Calu3 (cell line): ENCODE measurements at regions of chr5 and their contacts with region 1.

Region 1: DNA sequence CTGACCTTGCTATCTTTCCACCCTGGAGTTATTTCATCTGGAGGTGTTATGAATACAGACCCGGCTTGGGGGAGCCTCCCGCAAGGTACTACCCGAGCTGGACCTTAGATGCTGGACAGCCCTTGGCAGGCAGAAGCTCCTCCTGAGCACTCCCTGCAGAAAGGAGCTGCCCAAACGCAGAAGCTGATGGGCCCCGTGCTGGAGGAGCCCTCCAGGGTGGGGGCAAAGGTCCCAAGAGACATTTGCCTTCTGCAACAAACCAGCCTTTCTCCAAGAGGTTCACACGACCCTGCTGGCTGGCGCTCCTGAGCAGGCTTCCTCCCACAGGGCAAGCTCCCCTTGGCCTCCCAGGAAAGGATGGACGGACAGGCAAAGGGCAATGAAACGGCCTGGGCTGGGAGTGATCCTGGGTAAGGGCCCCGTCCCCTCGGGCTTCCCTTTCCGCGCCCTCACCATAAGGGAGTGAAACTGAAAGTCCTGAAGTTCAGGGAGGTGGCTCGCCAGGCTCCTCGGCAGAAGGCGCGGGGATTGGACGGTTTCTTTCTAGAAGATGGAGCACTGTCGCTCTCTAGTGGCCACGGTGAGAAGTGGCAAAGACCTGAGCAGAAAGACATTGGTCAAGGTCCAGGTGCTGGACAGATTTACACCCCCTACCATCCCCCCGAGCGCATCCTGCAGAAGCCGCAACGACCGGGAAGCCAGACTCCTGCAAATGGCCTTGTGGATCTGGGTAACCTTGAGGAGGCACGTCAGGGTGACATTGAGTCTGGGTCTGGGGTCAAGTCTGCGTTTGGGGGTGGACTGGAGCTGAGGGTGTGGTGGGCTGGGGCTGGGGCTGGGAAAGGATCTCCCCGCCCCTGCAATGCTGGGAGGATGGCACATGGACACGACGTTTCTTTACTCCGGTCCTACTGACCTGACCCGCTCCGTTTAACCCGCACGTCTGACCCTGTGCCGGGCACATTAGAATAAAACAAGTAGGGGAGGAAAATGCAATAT is 56.4 kb downstream of the NEURL1B start:
- DNase-seq: peak; percentile 92
- H3K4me3 Mint-ChIP-seq: peak overlapping the region; percentile 77
- H3K27ac Mint-ChIP-seq: peak overlapping the region; percentile 55
- H3K4me1 Mint-ChIP-seq: peaks cover 10% of the 10 kb centered on the region
- H3K27me3 Mint-ChIP-seq: peaks cover 36% of the 10 kb centered on the region
- CTCF ChIP-seq: peak; percentile 86

Region 2: DNA sequence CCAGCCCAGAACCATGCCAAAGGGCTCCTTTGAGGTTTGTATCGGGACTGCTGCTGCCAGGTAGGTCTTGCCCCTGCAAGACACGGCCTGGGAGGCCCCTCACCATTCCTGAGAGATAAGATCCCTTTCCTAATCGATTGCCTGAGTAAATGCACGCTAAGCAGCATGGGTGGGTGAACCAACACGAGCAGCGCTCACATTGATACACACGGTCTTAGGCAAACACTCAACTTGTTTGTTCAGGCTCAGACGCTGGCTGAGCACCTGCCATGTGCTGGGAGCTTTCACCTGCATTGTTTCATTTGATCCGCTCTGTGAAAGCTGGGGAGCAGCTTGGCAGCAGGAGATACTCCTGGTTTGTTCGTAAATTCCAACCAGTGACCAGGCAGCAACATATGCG is 133.2 kb before region 1 on chr5:
- CTCF ChIA-PET with region 1: no interaction called
- intact Hi-C with region 1: loop called (anchors 10 kb)
- DNase-seq: peak; percentile 24
- H3K4me3 Mint-ChIP-seq: no peak overlapping the region
- H3K27ac Mint-ChIP-seq: no peak overlapping the region
- H3K4me1 Mint-ChIP-seq: no peaks in the 10 kb centered on the region
- H3K27me3 Mint-ChIP-seq: peaks cover 99% of the 10 kb centered on the region
- CTCF ChIP-seq: no peak

Region 3: GRCh38 chr5:172973931-172974330 is 276.5 kb after region 1 on chr5:
- CTCF ChIA-PET with region 1: no interaction called
- intact Hi-C with region 1: no loop called
- DNase-seq: no peak
- H3K4me3 Mint-ChIP-seq: no peak overlapping the region
- H3K27ac Mint-ChIP-seq: no peak overlapping the region
- H3K4me1 Mint-ChIP-seq: no peaks in the 10 kb centered on the region
- H3K27me3 Mint-ChIP-seq: peaks cover 12% of the 10 kb centered on the region
- CTCF ChIP-seq: no peak